Uterus (tissue), 4 donors: ENCODE measurements at regions of chr6 and their contacts with region 1.

Region 1: DNA sequence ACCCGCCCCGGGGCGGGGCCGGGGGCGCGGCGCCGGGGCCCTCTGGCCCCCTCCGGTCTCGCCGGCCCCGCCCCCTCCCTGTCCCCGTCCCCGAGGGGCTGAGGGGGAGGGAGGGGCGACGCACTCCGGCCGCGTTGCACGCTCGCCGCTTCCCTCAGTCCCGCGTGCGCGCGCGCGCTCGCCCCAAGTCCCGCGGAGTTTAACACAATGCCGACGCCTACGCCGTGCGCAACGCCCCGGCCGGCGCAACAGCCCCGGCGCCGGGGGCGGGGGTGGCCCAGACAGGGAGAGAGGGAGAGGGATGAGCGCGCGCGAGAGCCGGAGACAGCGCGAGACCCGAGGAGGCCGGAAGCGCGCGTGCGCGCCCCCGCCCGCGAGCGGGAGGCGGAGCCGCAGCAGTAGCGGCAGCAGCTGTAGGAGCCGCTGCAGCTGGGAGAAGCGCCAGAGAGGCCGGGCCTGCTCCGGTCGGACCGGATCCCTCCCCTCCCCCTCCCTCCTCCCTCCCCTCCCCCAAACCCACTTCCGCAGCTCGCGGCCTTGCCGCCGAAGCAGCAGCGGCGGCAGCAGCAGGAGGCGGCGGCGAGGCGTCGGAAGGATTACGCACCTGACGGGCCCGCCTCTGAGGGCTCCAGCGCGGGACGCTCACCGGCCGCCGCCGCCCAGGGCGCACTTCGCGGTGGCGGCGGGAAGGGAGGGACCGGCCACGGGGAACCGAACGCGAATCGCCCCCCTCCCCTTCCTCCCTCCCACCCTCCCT is 905 bp downstream of the ZBTB2 start:
- DNase-seq: peak; percentile 96 to 98
- H3K4me3 ChIP-seq: peak overlapping the region; percentile 89 to 93
- H3K27ac ChIP-seq: peak overlapping the region; percentile 99
- H3K4me1 ChIP-seq: peaks cover 7% of the 10 kb centered on the region in 2 donors
- H3K27me3 ChIP-seq: no peaks in the 10 kb centered on the region
- CTCF ChIP-seq: peak in 1 of 4 experiments; percentile 4
- POLR2A ChIP-seq: peak; percentile 65 to 84

Region 2: GRCh38 chr6:151451950-151452749 is 61.7 kb after region 1 on chr6 and contains the start of gene RMND1:
- intact Hi-C with region 1: loop called (anchors 10 kb)
- DNase-seq: peak; percentile 100
- H3K4me3 ChIP-seq: peak within 1 kb of the TSS; percentile 93 to 98
- H3K27ac ChIP-seq: peak within 1 kb of the TSS; percentile 95 to 98
- H3K4me1 ChIP-seq: no peaks in the 10 kb centered on the region
- H3K27me3 ChIP-seq: no peaks in the 10 kb centered on the region
- CTCF ChIP-seq: peak in 1 of 4 experiments; percentile 11
- POLR2A ChIP-seq: peak; percentile 44 to 51
- total RNA-seq, gene RMND1: 4.1 to 48.8 (median 21.1) TPM